Panc1 (cell line): ENCODE measurements at regions of chr7 and their contacts with region 1.

Region 1: DNA sequence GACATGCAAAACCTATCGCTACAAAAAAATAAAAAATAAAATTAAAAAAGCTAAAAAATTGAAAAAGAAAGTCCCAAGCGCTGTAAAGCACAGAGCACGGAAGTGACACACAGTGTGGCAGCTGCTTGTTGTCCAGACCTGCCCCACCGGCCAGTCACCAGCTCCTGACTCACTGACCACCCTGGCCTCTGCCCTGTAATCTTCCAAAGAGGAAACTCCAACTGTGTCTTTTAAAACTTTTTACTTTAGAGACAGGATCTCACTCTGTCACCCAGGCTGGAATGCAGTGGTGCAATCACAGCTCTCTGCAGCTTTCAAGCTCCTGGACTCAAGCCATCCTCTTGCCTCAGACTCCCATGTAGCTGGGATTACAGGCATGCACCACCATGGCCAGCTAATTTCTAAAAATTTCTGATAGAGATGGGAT is 23.6 kb downstream of the GNA12 start:
- DNase-seq: peak; percentile 82
- ATAC-seq: peak; percentile 57
- H3K4me3 ChIP-seq: no peak overlapping the region
- H3K27ac ChIP-seq: peak overlapping the region; percentile 84
- H3K4me1 ChIP-seq: peaks cover 78% of the 10 kb centered on the region
- H3K27me3 ChIP-seq: no peaks in the 10 kb centered on the region
- CTCF ChIP-seq: no peak

Region 2: GRCh38 chr7:2760098-2760889 is 60.2 kb before region 1 on chr7:
- CTCF ChIA-PET with region 1: no interaction called
- POLR2A ChIA-PET with region 1: no interaction called
- in situ Hi-C with region 1: no loop called
- intact Hi-C with region 1: no loop called
- DNase-seq: peak; percentile 39
- ATAC-seq: peak; percentile 68
- H3K4me3 ChIP-seq: peak overlapping the region in 1 of 2 experiments; percentile 28; a peak in 2 of 4 replicates
- H3K27ac ChIP-seq: peak overlapping the region; percentile 98
- H3K4me1 ChIP-seq: peaks cover 76% of the 10 kb centered on the region
- H3K27me3 ChIP-seq: no peaks in the 10 kb centered on the region
- CTCF ChIP-seq: no peak

Region 3: DNA sequence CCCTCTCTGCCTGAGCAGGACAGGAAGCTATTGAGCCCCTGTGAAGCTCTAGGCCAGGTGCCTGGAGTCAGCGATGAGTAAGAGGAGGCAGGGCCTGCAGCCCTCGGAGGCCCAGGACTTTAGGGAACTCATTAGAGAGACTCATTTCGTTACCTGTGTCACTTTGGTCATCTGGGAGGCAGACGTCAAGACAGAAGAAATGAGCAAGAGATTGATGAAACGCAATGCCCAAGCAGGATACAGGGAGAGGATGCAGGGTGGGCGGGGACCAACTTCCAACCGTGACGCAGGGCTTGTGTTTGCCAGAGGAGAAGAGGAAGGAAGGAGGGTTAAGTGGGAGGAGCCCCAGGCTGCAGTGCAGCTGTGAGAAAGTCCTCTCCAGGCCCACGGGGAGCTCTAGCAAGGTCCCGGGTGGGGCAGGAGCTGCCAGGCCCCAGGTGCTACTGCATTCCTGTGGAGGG is 50.0 kb after region 1 on chr7:
- CTCF ChIA-PET with region 1: no interaction called
- POLR2A ChIA-PET with region 1: interaction called, 11 read pairs
- in situ Hi-C with region 1: no loop called
- intact Hi-C with region 1: no loop called
- DNase-seq: no peak
- ATAC-seq: 0 out of 2 replicates have a peak, but pooled peaks have one; percentile 25
- H3K4me3 ChIP-seq: no peak overlapping the region
- H3K27ac ChIP-seq: no peak overlapping the region
- H3K4me1 ChIP-seq: peaks cover 8% of the 10 kb centered on the region; the same call in 1 of the 2 replicates
- H3K27me3 ChIP-seq: no peaks in the 10 kb centered on the region
- CTCF ChIP-seq: no peak

Region 4: DNA sequence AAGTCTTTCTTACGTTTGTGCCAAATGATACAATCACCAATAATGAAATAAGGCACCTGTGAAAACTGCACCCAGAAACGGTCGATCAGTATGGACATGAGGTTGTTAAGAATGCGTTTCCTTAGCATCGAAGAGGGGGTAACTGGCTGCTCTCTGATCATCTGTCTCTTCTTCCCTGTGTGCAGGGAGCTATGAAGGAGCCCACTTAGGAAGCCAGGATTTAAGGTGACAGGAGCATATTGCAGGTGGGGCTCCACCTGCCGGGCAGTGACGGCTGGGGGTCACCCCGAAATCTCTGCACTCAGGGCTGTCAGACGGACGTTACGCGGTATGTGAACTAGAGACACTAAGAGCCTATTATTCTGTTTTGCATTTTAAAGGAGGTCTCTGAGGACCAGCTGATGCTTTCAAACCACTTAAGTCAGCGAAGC is 158.7 kb after region 1 on chr7:
- CTCF ChIA-PET with region 1: no interaction called
- POLR2A ChIA-PET with region 1: no interaction called
- in situ Hi-C with region 1: no loop called
- intact Hi-C with region 1: no loop called
- DNase-seq: no peak
- ATAC-seq: no peak
- H3K4me3 ChIP-seq: no peak overlapping the region
- H3K27ac ChIP-seq: no peak overlapping the region
- H3K4me1 ChIP-seq: no peaks in the 10 kb centered on the region
- H3K27me3 ChIP-seq: no peaks in the 10 kb centered on the region; the same call in 1 of the 2 replicates
- CTCF ChIP-seq: no peak

Region 5: GRCh38 chr7:3282457-3282856 is 461.9 kb after region 1 on chr7:
- CTCF ChIA-PET with region 1: no interaction called
- POLR2A ChIA-PET with region 1: no interaction called
- in situ Hi-C with region 1: no loop called
- intact Hi-C with region 1: no loop called
- DNase-seq: no peak
- ATAC-seq: no peak
- H3K4me3 ChIP-seq: no peak overlapping the region
- H3K27ac ChIP-seq: no peak overlapping the region
- H3K4me1 ChIP-seq: no peaks in the 10 kb centered on the region
- H3K27me3 ChIP-seq: no peaks in the 10 kb centered on the region
- CTCF ChIP-seq: no peak